SK-N-SH (cell line): ENCODE measurements at regions of chr3 and their contacts with region 1.

Region 1: DNA sequence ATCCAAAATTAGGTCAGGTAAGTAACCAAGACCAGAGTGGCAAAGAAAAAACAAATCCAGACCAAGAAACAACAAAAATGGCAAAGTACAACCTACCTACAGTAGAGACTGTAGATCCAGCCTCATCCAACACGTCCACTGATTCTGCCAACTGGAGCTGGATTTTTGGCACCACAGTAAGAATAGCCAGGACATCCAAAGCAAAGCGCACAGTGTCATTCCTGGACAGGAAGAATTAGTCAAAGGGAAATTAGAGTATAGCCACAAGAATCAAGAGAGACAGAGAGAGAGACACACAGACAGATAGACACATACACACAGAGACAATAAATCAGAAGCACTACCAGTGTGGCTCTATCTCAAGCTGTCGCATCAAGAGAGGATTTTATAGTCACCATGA is 31.1 kb downstream of the RBM15B start:
- DNase-seq: no peak
- H3K4me3 ChIP-seq: no peak overlapping the region
- H3K27ac ChIP-seq: no peak overlapping the region
- H3K4me1 ChIP-seq: no peaks in the 10 kb centered on the region
- H3K27me3 ChIP-seq: no peaks in the 10 kb centered on the region
- CTCF ChIP-seq: no peak
- EP300 ChIP-seq: no peak
- RAD21 ChIP-seq: no peak

Region 2: DNA sequence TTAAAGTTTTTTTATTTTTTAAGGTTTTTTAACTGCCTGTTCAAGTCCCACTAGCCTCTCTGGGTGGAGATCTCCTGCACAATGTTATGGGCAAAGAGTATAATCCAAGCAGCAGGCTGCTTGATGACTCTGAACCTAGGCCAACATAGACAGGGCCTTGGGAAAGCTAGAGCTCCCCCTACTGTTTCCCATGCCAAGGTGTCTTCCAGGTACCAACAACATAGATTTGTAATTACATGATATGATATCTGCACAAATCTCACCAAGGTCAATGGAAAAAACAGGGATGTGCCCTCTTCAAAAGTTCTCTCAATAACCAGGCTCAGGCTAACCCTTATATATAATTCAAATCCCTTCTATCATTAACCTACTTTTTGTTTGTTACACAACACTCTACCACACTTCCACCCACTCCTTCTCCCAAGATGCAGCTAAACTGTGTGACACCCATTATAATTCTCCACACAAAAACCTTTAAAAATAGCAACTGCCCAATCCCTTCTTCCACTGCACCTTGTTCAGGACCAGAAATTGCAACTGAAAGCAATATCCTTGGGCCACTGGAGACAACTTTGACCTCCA is 12.6 kb after region 1 on chr3:
- CTCF ChIA-PET with region 1: interaction called, 10 read pairs
- POLR2A ChIA-PET with region 1: no interaction called
- DNase-seq: peak; percentile 52
- H3K4me3 ChIP-seq: no peak overlapping the region
- H3K27ac ChIP-seq: no peak overlapping the region
- H3K4me1 ChIP-seq: no peaks in the 10 kb centered on the region
- H3K27me3 ChIP-seq: no peaks in the 10 kb centered on the region
- CTCF ChIP-seq: peak; percentile 77
- EP300 ChIP-seq: no peak
- RAD21 ChIP-seq: peak; percentile 47